A549 (cell line): ENCODE measurements at regions of chr7 and their contacts with region 1.

Region 1: GRCh38 chr7:1193593-1194424 is 33.8 kb upstream of the ZFAND2A start:
- DNase-seq: peak; percentile 65 to 69
- ATAC-seq: peak; percentile 96 to 97
- H3K4me3 ChIP-seq: no peak overlapping the region
- H3K27ac ChIP-seq: no peak overlapping the region
- H3K4me1 ChIP-seq: no peaks in the 10 kb centered on the region
- CTCF ChIP-seq: peak; percentile 65
- EP300 ChIP-seq: no peak
- POLR2A ChIP-seq: no peak
- RAD21 ChIP-seq: peak; percentile 90 to 91

Region 2: GRCh38 chr7:1181640-1182039 is 12.2 kb before region 1 on chr7:
- CTCF ChIA-PET with region 1: interaction called, 57 read pairs
- POLR2A ChIA-PET with region 1: no interaction called
- DNase-seq: no peak
- ATAC-seq: no peak
- H3K4me3 ChIP-seq: no peak overlapping the region
- H3K27ac ChIP-seq: no peak overlapping the region
- H3K4me1 ChIP-seq: peaks cover 3% of the 10 kb centered on the region; the same call in 2 of the 3 replicates
- CTCF ChIP-seq: no peak
- EP300 ChIP-seq: no peak
- POLR2A ChIP-seq: no peak
- RAD21 ChIP-seq: no peak

Region 3: GRCh38 chr7:1225441-1226185 is 31.8 kb after region 1 on chr7:
- CTCF ChIA-PET with region 1: interaction called, 58 read pairs
- POLR2A ChIA-PET with region 1: no interaction called
- DNase-seq: peak in 1 of 2 experiments; percentile 72
- ATAC-seq: peak; percentile 54 to 87; a peak in 3 of 6 replicates
- H3K4me3 ChIP-seq: no peak overlapping the region
- H3K27ac ChIP-seq: no peak overlapping the region
- H3K4me1 ChIP-seq: 0 out of 3 replicates have a peak, but pooled peaks cover 3% of the 10 kb centered on the region
- CTCF ChIP-seq: peak; percentile 95
- EP300 ChIP-seq: no peak
- POLR2A ChIP-seq: no peak
- RAD21 ChIP-seq: peak; percentile 74 to 81

Region 4: GRCh38 chr7:1403638-1404459 is 210.0 kb after region 1 on chr7:
- CTCF ChIA-PET with region 1: interaction called, 40 read pairs
- POLR2A ChIA-PET with region 1: no interaction called
- DNase-seq: peak in 1 of 2 experiments; percentile 65
- ATAC-seq: peak; percentile 38 to 70
- H3K4me3 ChIP-seq: peak overlapping the region; percentile 24; the same call in 2 of the 3 replicates
- H3K27ac ChIP-seq: no peak overlapping the region
- H3K4me1 ChIP-seq: peaks cover 14% of the 10 kb centered on the region; the same call in 2 of the 3 replicates
- CTCF ChIP-seq: no peak
- EP300 ChIP-seq: no peak
- POLR2A ChIP-seq: no peak
- RAD21 ChIP-seq: 0 out of 5 replicates have a peak, but pooled peaks of 1 of the 2 experiments have one; percentile 8

Region 5: GRCh38 chr7:1432411-1433082 is 238.7 kb after region 1 on chr7:
- CTCF ChIA-PET with region 1: interaction called, 90 read pairs
- POLR2A ChIA-PET with region 1: no interaction called
- DNase-seq: peak; percentile 60 to 66
- ATAC-seq: peak; percentile 61 to 84
- H3K4me3 ChIP-seq: no peak overlapping the region
- H3K27ac ChIP-seq: no peak overlapping the region
- H3K4me1 ChIP-seq: peaks cover 4% of the 10 kb centered on the region; the same call in 2 of the 3 replicates
- CTCF ChIP-seq: peak; percentile 81
- EP300 ChIP-seq: no peak
- POLR2A ChIP-seq: no peak
- RAD21 ChIP-seq: peak; percentile 68 to 76

Region 6: DNA sequence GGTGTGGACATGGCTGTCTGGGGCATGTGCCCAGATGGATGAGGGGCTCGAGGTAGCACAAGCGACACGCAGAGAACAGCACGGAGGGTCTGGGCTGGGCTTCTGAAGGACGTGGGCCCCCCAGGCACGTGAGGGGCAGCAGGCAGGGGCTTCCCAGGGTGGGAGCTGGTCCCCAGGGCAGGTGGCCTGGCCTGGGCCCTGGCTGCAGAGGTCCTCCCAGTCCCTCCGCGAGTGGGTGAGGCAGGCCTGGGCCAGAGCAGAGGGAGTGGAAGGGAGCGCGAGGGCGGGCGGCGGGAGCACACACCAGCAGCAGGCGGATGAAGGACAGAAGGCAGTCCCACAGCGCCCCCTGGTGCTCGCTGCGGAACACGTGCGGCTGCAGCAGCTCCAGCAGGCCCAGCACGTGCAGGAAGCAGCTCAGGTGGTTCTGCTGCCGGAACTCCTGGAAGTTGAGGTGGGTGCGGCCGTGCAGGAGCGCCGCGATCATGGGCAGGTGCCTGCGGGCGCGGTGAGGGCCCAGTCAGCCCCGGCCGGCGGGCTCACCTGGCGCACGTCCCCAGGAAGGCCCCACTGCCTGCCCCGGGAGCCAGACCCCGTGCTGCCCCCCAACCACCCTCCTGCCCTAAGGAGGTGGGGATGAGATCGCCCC is 280.2 kb after region 1 on chr7:
- CTCF ChIA-PET with region 1: interaction called, 27 read pairs
- POLR2A ChIA-PET with region 1: no interaction called
- DNase-seq: peak; percentile 77 to 88
- ATAC-seq: peak; percentile 59 to 79
- H3K4me3 ChIP-seq: no peak overlapping the region
- H3K27ac ChIP-seq: peak overlapping the region in 1 of 2 experiments; percentile 76; a peak in 3 of 6 replicates
- H3K4me1 ChIP-seq: peaks cover 3% of the 10 kb centered on the region; the same call in 1 of the 3 replicates
- CTCF ChIP-seq: peak; percentile 73
- EP300 ChIP-seq: no peak
- POLR2A ChIP-seq: no peak
- RAD21 ChIP-seq: peak; percentile 74 to 76

Region 7: DNA sequence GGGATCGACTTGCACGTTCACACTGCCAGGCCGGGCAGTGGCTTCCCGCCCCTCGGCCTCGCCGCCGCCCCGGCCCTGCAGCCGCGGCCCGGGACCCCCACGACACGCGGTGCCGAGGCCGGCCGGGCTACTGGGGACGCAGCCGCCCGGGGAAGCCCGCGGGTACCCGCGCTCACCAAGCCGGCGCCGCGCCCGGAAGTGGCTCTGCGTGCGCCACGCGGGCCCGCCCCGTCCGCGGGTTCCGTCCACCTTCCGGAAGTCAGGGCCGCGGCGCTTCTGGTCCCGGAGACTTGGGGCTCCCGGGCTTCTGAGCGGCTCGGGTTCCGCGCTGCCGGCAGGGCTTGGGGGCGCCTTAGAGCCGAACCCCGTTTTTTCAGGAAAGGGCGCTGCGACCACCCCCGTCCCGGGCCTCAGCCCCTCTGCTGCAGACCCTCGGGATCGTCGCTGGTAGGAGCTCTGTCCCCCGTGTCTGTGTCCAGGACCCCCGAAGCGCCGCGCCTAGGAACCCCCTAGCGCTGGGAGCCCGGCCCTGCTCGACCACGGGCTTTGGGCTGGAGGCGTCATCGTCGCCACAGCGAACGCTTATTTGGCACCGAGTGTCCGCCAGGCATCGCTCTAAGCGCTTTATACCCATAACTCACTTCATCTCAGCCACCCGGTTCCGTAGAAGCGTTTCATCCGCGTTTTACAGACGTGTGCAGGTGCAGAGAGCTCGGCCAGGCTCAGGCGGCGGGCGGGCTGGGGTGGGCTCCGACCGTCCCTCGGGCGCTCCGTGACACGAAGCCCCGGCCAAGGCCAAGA is 376.2 kb after region 1 on chr7 and contains the start of gene PSMG3:
- CTCF ChIA-PET with region 1: no interaction called
- POLR2A ChIA-PET with region 1: no interaction called
- DNase-seq: peak; percentile 92 to 93
- ATAC-seq: peak; percentile 89 to 92
- H3K4me3 ChIP-seq: peak within 1 kb of the TSS; percentile 83
- H3K27ac ChIP-seq: peak within 1 kb of the TSS; percentile 96 to 99
- H3K4me1 ChIP-seq: peaks cover 44% of the 10 kb centered on the region
- CTCF ChIP-seq: no peak
- EP300 ChIP-seq: no peak
- POLR2A ChIP-seq: peak; percentile 74
- RAD21 ChIP-seq: no peak; a peak in 1 of 5 replicates
- polyA plus RNA-seq, gene PSMG3: 83.9 and 89.3 TPM in 2 replicates